Aorta (tissue), 5 donors: ENCODE measurements at regions of chr2 and their contacts with region 1.

Region 1: GRCh38 chr2:238596571-238597551 is 170.1 kb downstream of the ASB1 start:
- DNase-seq: peak; percentile 73 to 89
- ATAC-seq: peak; percentile 77
- H3K4me3 ChIP-seq: no peak overlapping the region
- H3K27ac ChIP-seq: peak overlapping the region in 1 of 2 donors; percentile 55
- H3K4me1 ChIP-seq: peaks cover 3 to 8% of the 10 kb centered on the region in 2 donors
- H3K27me3 ChIP-seq: no peaks in the 10 kb centered on the region

Region 2: DNA sequence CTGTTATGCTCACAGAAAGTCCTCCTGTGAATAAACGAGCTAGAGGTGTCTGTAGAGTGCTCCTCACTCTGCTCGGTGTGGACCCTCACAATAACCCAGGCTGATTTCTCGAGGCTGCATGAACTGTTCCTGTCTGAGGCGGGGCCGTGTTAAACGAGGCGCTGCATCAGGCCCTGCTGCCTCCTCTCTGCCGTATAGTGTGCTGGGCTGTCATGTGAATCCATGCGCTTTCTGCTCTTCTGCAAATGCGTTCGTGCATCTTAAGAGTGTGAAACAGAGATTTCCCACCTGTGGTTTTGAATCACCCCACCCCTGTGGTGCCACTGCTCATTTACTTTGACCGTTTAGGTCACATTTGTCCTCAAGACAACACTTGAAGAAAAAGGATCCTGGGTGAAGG is 250.3 kb before region 1 on chr2:
- intact Hi-C with region 1: no loop called
- DNase-seq: no peak
- ATAC-seq: no peak
- H3K4me3 ChIP-seq: no peak overlapping the region
- H3K27ac ChIP-seq: no peak overlapping the region
- H3K4me1 ChIP-seq: no peaks in the 10 kb centered on the region
- H3K27me3 ChIP-seq: no peaks in the 10 kb centered on the region

Region 3: GRCh38 chr2:238462782-238463396 is 134.0 kb before region 1 on chr2:
- intact Hi-C with region 1: no loop called
- DNase-seq: no peak
- ATAC-seq: no peak
- H3K4me3 ChIP-seq: no peak overlapping the region
- H3K27ac ChIP-seq: no peak overlapping the region
- H3K4me1 ChIP-seq: no peaks in the 10 kb centered on the region
- H3K27me3 ChIP-seq: no peaks in the 10 kb centered on the region

Region 4: DNA sequence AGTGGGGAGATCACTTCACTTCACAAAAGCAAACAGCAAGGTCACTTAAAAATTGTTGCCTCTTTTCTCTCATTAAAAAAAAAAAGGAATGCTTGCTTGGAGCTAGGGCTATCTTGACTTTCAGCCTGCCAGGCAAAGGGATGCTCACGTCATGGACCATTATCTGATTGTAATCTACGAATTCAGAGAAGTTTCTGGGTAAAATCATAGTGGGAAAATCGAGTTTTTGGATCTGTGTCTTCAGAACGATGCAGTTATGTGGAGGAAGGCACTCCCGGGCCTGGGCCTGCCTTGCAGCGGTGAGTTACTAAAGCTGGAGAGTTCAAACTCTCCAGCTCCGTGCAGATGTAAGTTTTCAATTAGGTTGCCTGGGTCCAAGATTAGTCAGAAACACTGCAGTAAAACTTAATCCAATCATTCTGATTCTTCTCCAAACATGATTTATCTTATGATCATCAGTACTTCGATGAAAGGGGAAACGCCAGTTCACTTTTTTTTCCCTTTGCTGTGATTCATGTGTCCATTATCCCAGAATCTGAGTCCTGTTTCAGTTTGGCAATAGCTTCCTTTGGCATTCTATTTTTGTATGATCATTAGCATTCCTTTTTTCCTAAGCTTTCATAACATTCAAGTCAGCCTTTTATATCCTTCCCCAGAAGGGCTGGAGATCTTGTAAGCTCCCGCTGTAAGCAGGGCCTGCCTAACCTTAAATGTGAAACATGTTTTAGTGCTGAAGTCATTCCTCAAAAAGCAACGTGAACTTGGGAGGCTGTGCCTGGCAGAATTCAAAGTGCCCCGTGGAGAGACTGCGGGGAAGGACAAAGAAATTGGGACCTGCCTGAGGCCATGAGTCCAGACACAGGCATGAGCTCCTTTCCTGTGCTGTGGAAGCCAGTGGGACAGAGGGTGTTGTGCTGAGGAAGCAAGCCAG is 131.7 kb after region 1 on chr2:
- intact Hi-C with region 1: loop called in 1 of 2 experiments (anchors 5 kb)
- DNase-seq: peak in 1 of 2 donors; percentile 74
- ATAC-seq: peak; percentile 74
- H3K4me3 ChIP-seq: no peak overlapping the region
- H3K27ac ChIP-seq: peak overlapping the region; percentile 88 to 100
- H3K4me1 ChIP-seq: peaks cover 0 to 2% of the 10 kb centered on the region in 2 donors
- H3K27me3 ChIP-seq: no peaks in the 10 kb centered on the region

Region 5: DNA sequence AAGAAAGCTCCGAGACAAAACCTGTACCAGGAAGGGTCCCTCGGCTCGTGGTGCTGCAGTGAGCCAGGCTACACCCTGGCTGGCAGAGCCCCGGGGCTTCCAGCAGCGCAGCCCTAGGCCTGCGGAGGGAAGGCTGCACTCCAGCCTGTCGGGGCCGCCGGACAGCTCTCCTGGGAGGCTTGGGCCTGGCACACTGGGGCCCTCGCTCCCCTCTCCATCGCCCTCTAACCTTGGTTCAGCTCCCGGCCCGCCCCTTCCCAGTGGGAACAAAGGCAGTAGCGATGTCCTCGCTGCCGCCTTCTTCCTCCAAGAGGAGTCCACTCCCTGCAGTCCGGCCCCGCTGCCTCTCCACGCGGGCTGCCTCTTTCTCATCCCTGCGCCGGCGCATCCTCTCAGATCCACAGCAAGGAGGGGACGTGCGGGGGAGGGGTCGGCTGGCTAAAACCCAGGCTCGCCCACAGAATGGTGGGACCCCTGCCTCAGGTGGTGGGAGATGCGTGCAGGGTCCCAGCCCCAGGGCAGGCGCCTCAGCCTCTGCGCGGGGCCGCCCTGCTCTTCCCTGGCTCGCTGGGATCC is 389.1 kb after region 1 on chr2:
- intact Hi-C with region 1: no loop called
- DNase-seq: no peak
- ATAC-seq: no peak
- H3K4me3 ChIP-seq: no peak overlapping the region
- H3K27ac ChIP-seq: no peak overlapping the region
- H3K4me1 ChIP-seq: no peaks in the 10 kb centered on the region
- H3K27me3 ChIP-seq: no peaks in the 10 kb centered on the region